A673 (cell line): ENCODE measurements at regions of chr2 and their contacts with region 1.

Region 1: DNA sequence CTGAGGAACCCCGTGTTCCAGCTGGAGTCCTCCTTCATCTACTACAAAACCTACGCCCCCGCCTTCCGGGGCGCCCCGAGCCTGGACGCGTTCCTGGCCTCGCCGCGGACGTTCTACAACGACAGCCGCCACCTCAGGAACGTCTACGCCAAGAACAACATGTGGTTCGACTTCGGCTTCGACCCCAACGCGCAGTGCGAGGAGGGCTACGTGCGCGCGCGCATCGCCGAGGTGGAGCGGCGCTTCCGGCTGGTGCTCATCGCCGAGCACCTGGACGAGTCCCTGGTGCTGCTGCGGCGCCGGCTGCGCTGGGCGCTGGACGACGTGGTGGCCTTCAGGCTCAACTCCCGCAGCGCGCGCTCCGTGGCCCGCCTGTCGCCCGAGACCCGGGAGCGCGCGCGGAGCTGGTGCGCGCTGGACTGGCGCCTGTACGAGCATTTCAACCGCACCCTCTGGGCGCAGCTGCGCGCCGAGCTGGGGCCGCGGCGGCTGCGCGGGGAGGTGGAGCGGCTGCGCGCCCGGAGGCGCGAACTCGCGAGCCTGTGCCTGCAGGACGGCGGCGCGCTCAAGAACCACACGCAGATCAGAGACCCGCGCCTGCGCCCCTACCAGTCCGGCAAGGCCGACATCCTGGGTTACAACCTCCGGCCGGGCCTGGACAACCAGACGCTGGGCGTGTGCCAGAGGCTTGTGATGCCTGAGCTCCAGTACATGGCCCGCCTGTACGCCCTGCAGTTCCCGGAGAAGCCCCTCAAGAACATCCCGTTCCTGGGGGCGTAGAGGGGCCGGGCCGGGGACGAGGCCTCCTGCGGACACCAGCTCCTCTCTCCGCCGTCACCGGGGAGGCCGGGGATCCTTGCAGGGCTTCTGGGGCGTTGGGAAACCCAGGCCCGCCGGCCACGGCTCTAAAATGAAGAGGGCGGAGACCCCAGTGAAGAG is 5.3 kb upstream of the NEU4 start:
- DNase-seq: peak; percentile 80
- H3K4me3 ChIP-seq: peak overlapping the region; percentile 56
- H3K27ac ChIP-seq: peak overlapping the region; percentile 98
- H3K4me1 ChIP-seq: peaks cover 33% of the 10 kb centered on the region
- H3K27me3 ChIP-seq: no peaks in the 10 kb centered on the region
- CTCF ChIP-seq: no peak

Region 2: GRCh38 chr2:241686649-241687425 is 116.8 kb before region 1 on chr2 and contains the start of gene DTYMK:
- CTCF ChIA-PET with region 1: no interaction called
- POLR2A ChIA-PET with region 1: no interaction called
- intact Hi-C with region 1: no loop called
- DNase-seq: peak; percentile 99
- H3K4me3 ChIP-seq: peak within 1 kb of the TSS; percentile 96
- H3K27ac ChIP-seq: peak within 1 kb of the TSS; percentile 98
- H3K4me1 ChIP-seq: peaks cover 11% of the 10 kb centered on the region
- H3K27me3 ChIP-seq: no peaks in the 10 kb centered on the region
- CTCF ChIP-seq: no peak
- total RNA-seq, gene DTYMK: 139 TPM in 2 replicates

Region 3: DNA sequence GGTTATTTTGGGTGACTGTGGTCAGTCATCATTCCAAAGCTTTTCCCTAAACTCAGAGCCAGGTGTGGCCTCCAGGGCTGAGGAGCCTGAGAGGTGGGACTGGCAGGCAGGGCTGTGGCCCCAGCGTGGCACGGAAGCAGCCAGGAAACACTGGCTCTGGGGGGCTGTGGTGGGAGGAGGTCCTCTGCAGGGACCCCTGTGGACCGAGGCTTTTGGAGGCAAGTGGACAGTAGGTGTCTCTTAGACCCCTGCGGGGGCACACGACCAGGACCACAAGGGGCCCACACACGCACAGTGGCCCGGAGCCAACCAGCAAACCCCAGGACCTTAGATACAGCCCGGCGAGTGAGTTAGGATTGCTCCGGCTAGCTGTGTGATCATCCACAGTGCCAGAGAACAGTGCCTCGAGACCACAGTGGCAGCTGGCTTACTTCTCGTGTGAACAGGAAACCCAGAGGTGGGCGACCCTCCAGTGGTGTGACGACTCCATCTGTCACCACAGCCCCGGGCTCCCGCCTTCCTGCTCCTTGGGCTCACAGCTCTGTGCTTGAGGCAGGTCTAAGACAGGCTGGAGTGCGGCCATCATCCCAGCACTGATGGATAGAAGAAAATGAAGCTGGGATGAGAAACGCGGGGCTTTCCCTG is 64.2 kb after region 1 on chr2:
- CTCF ChIA-PET with region 1: no interaction called
- POLR2A ChIA-PET with region 1: interaction called, 12 read pairs
- intact Hi-C with region 1: no loop called
- DNase-seq: no peak
- H3K4me3 ChIP-seq: no peak overlapping the region
- H3K27ac ChIP-seq: peak overlapping the region; percentile 46
- H3K4me1 ChIP-seq: peaks cover 17% of the 10 kb centered on the region
- H3K27me3 ChIP-seq: no peaks in the 10 kb centered on the region
- CTCF ChIP-seq: no peak